ENCODE measurements at regions of chr12 and their contacts with region 1.

Region 1: DNA sequence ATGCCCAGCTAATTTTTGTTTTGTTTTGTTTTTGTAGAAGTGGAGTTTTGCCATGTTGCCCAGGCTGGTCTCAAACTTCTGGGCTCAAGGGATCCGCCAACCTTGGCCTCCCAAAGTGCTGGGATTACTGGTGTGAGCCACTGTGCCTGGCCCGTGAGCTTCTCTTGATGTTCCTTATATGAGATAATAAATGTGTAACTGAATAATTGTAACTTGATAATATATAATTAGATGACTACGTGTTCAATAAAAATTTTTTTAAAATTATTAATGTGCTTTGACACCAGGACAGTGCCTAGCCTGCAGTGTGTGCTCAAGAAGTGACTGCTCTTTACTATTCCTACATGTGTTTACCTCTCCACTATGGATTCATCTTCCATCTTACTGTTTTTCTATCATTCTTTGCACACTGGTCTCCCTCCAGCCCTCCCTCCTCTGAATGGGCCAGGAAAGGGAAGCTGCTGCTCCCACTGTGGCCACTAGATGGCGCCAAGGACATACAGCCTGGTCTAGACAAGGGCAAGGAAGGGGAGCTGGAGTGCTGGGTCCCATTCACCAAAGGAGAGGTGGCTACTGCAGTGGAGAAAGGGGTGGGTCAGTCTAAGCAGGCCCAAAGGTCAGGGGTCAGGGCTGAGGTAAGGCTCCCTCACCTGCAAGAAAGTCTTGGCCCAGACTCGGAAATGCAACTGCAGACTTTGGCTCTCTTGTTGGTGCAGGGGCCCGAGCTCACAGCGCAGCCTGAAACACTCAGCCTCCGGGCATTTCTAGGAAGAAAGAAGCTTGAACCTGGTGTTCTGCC is 14.7 kb upstream of the ZNF385A start:
- DNase-seq: peak; percentile 87
- H3K4me3 ChIP-seq: no peak overlapping the region
- H3K27ac ChIP-seq: peak overlapping the region; percentile 39
- H3K4me1 ChIP-seq: peaks cover 17% of the 10 kb centered on the region
- H3K27me3 ChIP-seq: no peaks in the 10 kb centered on the region
- CTCF ChIP-seq: peak; percentile 100

Region 2: DNA sequence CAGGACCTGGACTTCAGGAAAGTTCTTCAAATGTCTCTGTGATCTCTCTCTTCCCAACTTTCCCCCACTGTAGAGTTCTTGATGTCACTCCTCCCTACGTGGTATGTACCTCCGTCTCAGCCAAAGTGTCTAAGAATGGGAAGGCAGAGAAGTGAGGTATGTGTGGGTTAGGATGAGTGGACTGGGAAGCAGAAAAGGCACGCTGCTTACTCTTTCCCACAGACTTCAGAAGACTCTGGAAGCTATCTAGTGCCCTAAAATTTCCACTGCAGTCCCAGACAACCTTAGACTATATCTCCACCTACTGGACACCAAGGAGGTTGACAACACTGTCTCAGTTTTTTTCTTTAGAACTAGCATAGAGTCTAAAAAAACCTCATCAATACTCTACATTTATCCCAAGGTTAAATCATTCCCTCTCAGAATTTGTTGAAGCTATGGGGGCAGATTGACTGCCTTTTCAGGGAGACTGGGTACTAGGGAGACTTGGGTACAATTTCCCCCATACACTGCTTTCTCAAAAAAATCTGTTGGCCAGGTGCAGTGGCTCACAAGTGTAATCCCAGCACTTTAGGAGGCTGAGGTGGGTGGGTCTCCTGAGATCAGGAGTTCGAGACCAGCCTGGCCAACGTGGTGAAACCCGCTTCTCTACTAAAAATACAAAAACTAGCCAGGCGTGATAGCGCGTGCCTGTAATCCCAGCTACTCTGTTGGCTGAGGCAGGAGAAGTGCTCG is 40.5 kb after region 1 on chr12:
- intact Hi-C with region 1: loop called (anchors 2 kb)
- DNase-seq: no peak
- H3K4me3 ChIP-seq: no peak overlapping the region
- H3K27ac ChIP-seq: peak overlapping the region; percentile 60
- H3K4me1 ChIP-seq: peaks cover 17% of the 10 kb centered on the region
- H3K27me3 ChIP-seq: no peaks in the 10 kb centered on the region
- CTCF ChIP-seq: peak; percentile 88